Activated CD4-positive, alpha-beta T cell treated with anti-CD3 and anti-CD28 coated beads, Interleukin-2, amount 10 ng/mL, durations not matched to agents 24 days and 14 days (primary cell): ENCODE measurements at regions of chrX and their contacts with region 1.

Region 1: DNA sequence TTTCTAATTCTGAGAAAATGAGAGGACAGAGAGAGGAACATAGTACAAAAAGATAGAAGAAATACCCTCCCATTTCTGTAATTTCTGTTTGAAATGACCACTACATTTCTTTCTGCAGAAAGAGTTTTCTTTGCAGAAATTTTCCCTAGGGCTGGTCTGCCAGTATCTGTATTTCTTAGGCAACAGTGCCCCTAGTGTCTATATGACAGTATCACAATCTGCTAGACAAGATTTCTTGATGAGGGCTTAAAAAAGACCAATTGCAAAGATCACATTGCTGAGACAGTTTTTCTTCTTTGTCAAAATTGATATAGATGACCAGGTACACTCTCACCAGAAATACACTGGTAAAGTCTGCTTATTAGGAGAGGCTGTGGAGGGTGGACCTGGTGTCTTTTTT is 81.0 kb upstream of the ZDHHC15 start:
- DNase-seq: peak; percentile 53
- H3K4me3 Mint-ChIP-seq: no peak overlapping the region
- H3K27ac Mint-ChIP-seq: no peak overlapping the region
- H3K4me1 Mint-ChIP-seq: no peaks in the 10 kb centered on the region
- H3K27me3 Mint-ChIP-seq: no peaks in the 10 kb centered on the region

Region 2: DNA sequence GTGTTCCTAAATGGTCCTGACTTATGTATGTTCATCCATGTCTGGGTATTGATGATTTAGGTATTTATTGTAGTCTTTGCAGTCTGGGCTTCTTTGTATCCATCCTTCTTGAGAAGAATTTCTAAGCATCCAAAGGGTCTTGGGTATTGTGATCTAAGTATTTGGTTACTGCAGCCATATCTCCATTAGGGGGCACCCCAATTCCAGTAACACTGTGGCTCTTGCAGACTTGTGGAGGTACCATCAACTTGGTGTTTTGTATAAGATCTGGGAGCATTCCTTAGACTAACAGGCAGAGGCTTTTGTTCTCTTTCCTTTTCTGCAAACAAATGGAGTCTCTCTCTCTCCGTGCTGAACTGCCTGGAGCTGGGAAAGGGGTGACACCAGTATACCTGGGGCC is 564.9 kb before region 1 on chrX:
- intact Hi-C with region 1: loop called (anchors 2 kb)
- DNase-seq: peak; percentile 62
- H3K4me3 Mint-ChIP-seq: no peak overlapping the region
- H3K27ac Mint-ChIP-seq: no peak overlapping the region
- H3K4me1 Mint-ChIP-seq: no peaks in the 10 kb centered on the region
- H3K27me3 Mint-ChIP-seq: no peaks in the 10 kb centered on the region

Region 3: DNA sequence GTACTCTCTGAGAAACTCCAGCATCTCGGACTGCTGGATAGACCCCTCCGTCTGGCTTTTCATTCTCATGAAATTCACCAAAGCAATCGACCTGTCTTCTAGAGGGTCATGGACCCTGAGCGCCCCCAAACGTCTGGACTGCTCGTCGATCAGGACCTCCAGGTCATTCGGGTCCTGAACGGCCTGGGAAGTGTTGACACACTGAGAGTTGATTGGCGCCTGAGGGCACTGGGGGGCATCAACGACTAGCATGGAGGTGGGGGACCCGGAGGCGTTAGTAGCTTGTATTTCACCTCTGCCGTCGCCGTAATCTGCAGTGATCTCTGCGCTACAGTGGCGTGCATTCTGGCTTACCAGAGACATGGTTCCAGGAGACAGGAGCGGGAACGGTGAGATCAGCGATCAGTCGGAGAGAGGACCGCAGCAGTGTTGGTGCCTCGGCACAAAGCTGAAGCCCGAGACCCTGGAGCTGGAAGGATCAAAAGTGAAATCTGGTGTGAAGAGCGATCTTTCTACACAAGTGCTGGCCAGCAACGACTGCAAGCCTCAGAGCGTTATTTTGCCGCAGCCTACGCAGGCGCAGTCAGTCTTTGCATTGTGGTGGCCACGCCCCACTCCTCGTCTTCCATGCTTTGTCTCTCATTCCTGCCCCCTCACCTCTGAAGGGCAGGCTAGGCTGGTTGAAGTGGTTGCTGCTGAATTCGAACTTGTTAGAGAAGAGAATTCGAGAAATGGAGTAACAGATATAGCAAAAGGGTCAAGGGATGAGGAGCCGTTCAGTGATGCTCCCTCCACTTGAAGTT is 181.1 kb after region 1 on chrX and contains the start of gene MAGEE2:
- intact Hi-C with region 1: no loop called
- DNase-seq: no peak
- H3K4me3 Mint-ChIP-seq: peak within 1 kb of the TSS; percentile 78
- H3K27ac Mint-ChIP-seq: no peak within 1 kb of the TSS
- H3K4me1 Mint-ChIP-seq: peaks cover 2% of the 10 kb centered on the region
- H3K27me3 Mint-ChIP-seq: peaks cover 2% of the 10 kb centered on the region
- total RNA-seq, gene MAGEE2: not detected in 2 replicates